ENCODE measurements at regions of chr9 and their contacts with region 1.

Region 1: GRCh38 chr9:127734747-127735529 is at the start of gene TOR2A:
- DNase-seq: peak; percentile 96
- H3K4me3 Mint-ChIP-seq: peak within 1 kb of the TSS; percentile 74
- H3K27ac Mint-ChIP-seq: peak within 1 kb of the TSS; percentile 22
- H3K4me1 Mint-ChIP-seq: no peaks in the 10 kb centered on the region
- H3K27me3 Mint-ChIP-seq: no peaks in the 10 kb centered on the region
- CTCF ChIP-seq: peak; percentile 96
- total RNA-seq, gene TOR2A: 8.4 and 11.3 TPM in 2 replicates

Region 2: GRCh38 chr9:127187231-127187956 is 547.5 kb before region 1 on chr9:
- CTCF ChIA-PET with region 1: no interaction called
- POLR2A ChIA-PET with region 1: no interaction called
- intact Hi-C with region 1: no loop called
- DNase-seq: peak; percentile 99
- H3K4me3 Mint-ChIP-seq: no peak overlapping the region
- H3K27ac Mint-ChIP-seq: peak overlapping the region; percentile 23
- H3K4me1 Mint-ChIP-seq: peaks cover 11% of the 10 kb centered on the region
- H3K27me3 Mint-ChIP-seq: peaks cover 39% of the 10 kb centered on the region
- CTCF ChIP-seq: no peak

Region 3: GRCh38 chr9:127707726-127708147 is 27.2 kb before region 1 on chr9:
- CTCF ChIA-PET with region 1: no interaction called
- POLR2A ChIA-PET with region 1: interaction called, 3 read pairs
- intact Hi-C with region 1: loop called (anchors 1 kb)
- DNase-seq: peak; percentile 38
- H3K4me3 Mint-ChIP-seq: no peak overlapping the region
- H3K27ac Mint-ChIP-seq: no peak overlapping the region
- H3K4me1 Mint-ChIP-seq: no peaks in the 10 kb centered on the region
- H3K27me3 Mint-ChIP-seq: no peaks in the 10 kb centered on the region
- CTCF ChIP-seq: no peak

Region 4: GRCh38 chr9:127723450-127723849 is 11.5 kb before region 1 on chr9:
- CTCF ChIA-PET with region 1: interaction called, 12 read pairs
- POLR2A ChIA-PET with region 1: interaction called, 6 read pairs
- intact Hi-C with region 1: no loop called
- DNase-seq: peak; percentile 75
- H3K4me3 Mint-ChIP-seq: no peak overlapping the region
- H3K27ac Mint-ChIP-seq: no peak overlapping the region
- H3K4me1 Mint-ChIP-seq: peaks cover 27% of the 10 kb centered on the region
- H3K27me3 Mint-ChIP-seq: no peaks in the 10 kb centered on the region
- CTCF ChIP-seq: no peak

Region 5: DNA sequence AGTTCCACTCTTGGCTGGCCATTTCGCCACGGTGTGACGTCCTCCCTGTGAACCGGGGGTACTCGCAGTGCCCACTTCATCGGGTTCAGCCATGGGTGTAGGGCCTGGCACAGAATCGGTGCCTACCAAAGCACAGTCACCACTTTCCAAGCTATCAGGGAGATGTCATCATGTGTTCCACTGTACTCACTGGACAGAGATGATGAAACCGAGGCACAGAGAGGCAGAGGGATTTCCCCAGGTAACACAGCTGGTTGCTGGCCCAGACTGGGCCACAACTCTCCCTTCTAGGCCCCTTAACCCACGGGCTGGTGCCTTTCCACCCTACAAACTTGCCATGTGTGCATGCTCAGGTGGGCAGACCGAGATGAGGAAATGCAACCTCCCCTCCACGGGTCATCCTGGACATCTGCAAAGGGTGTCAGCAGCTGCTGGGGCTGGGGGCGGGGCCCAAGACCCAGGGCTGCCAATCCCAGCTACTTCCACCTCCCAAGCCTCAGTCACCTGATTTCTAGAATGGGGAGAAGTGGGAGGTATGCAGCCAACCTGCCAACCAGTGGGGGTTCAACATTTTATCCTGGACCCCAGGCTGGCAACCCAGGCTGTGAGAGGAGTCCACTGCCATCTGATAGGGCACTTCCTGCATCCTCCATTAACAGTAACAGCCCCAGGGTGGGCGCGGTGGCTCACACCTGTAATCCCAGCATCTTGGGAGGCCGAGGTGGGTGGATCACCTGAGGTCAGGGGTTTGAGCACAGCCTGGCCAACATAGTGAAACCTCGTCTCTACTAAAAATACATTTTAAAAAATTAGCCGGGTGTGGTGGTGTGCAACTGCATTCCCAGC is 44.4 kb after region 1 on chr9:
- CTCF ChIA-PET with region 1: interaction called, 27 read pairs
- POLR2A ChIA-PET with region 1: interaction called, 37 read pairs
- intact Hi-C with region 1: no loop called
- DNase-seq: peak; percentile 38
- H3K4me3 Mint-ChIP-seq: no peak overlapping the region
- H3K27ac Mint-ChIP-seq: peak overlapping the region; percentile 31
- H3K4me1 Mint-ChIP-seq: no peaks in the 10 kb centered on the region
- H3K27me3 Mint-ChIP-seq: no peaks in the 10 kb centered on the region
- CTCF ChIP-seq: no peak

Region 6: GRCh38 chr9:127869310-127870152 is 134.6 kb after region 1 on chr9:
- CTCF ChIA-PET with region 1: interaction called, 17 read pairs
- POLR2A ChIA-PET with region 1: interaction called, 4 read pairs
- intact Hi-C with region 1: loop called (anchors 1 kb)
- DNase-seq: peak; percentile 89
- H3K4me3 Mint-ChIP-seq: no peak overlapping the region
- H3K27ac Mint-ChIP-seq: no peak overlapping the region
- H3K4me1 Mint-ChIP-seq: no peaks in the 10 kb centered on the region
- H3K27me3 Mint-ChIP-seq: no peaks in the 10 kb centered on the region
- CTCF ChIP-seq: peak; percentile 86